AG04450 (cell line): ENCODE measurements at regions of chr1 and their contacts with region 1.

Region 1: DNA sequence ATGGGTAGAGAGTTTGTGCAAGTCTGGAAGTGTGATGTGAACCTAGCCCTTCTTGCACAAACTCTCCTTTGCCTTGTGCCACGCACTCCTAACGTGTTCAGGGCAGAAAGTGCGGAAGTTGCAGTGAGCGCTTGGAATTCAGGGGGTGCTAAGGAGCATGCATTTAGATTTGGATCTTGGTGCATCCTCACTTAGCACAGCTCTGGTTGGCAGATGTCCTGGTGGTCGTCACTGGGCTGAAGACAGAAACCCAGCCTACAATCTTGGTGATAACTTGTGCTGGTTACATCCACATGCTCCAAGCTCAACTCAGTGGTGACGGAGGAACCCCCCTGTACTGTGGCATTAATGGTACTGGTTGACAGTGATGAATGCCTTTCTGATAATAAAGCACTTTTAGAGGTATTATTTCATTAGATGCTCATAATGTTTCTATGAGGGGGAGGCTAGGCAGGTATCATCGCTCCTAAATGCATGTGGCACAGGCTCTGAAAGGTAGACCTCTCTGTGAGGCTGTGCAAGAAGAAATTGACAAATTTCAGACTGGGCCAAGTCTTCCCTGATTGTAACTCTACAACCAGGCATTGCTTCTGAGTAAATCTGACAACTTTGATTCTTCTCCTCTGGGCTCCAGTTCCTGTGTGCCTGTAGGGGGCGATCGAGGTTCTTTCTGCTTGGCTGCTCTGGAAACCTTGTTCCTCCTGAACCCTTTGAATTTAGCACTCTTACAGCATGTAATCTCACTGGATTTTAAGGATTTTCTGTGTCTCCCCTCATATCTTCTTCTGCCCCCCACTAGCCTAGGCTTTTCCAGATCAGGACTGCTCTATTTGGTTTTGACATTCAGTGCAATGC is 40.6 kb downstream of the MAPKAPK2 start:
- DNase-seq: no peak
- H3K4me3 ChIP-seq: no peak overlapping the region
- H3K27ac ChIP-seq: no peak overlapping the region
- H3K27me3 ChIP-seq: no peaks in the 10 kb centered on the region
- CTCF ChIP-seq: peak; percentile 75

Region 2: GRCh38 chr1:206540044-206540780 is 185.1 kb before region 1 on chr1:
- CTCF ChIA-PET with region 1: no interaction called
- POLR2A ChIA-PET with region 1: no interaction called
- DNase-seq: no peak
- H3K4me3 ChIP-seq: no peak overlapping the region
- H3K27ac ChIP-seq: no peak overlapping the region
- H3K27me3 ChIP-seq: no peaks in the 10 kb centered on the region
- CTCF ChIP-seq: no peak

Region 3: DNA sequence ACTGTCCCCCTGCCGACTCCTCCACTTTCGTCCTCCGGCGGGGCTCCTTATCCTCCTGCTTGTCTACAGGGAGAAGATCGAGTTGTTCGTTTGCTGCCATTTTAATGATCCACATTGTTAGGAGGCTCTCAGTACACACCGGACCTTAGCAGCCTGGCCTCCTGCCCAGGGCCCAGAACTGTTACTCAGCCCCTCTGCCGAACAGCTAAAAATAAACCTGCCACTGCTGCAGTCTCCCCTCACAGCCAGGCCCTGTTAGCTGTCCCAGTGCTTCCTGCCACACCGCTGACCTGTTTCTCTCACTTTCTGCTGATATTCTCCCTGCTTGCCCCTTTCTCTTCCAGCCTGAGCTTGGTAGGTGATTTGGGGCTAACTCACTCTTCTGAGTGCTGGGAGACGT is 32.3 kb before region 1 on chr1:
- CTCF ChIA-PET with region 1: interaction called, 26 read pairs
- POLR2A ChIA-PET with region 1: no interaction called
- DNase-seq: no peak
- H3K4me3 ChIP-seq: peak overlapping the region; percentile 31
- H3K27ac ChIP-seq: peak overlapping the region; percentile 82
- H3K27me3 ChIP-seq: no peaks in the 10 kb centered on the region
- CTCF ChIP-seq: no peak

Region 4: GRCh38 chr1:206748348-206749030 is 23.2 kb after region 1 on chr1:
- CTCF ChIA-PET with region 1: interaction called, 13 read pairs
- POLR2A ChIA-PET with region 1: no interaction called
- DNase-seq: no peak
- H3K4me3 ChIP-seq: no peak overlapping the region
- H3K27ac ChIP-seq: no peak overlapping the region
- H3K27me3 ChIP-seq: no peaks in the 10 kb centered on the region
- CTCF ChIP-seq: no peak

Region 5: GRCh38 chr1:206808615-206809014 is 83.3 kb after region 1 on chr1:
- CTCF ChIA-PET with region 1: interaction called, 37 read pairs
- POLR2A ChIA-PET with region 1: no interaction called
- DNase-seq: no peak
- H3K4me3 ChIP-seq: no peak overlapping the region
- H3K27ac ChIP-seq: no peak overlapping the region
- H3K27me3 ChIP-seq: no peaks in the 10 kb centered on the region
- CTCF ChIP-seq: peak; percentile 66

Region 6: GRCh38 chr1:206982216-206982615 is 256.9 kb after region 1 on chr1:
- CTCF ChIA-PET with region 1: interaction called, 13 read pairs
- POLR2A ChIA-PET with region 1: no interaction called
- DNase-seq: no peak
- H3K4me3 ChIP-seq: no peak overlapping the region
- H3K27ac ChIP-seq: no peak overlapping the region
- H3K27me3 ChIP-seq: peaks cover 42% of the 10 kb centered on the region
- CTCF ChIP-seq: peak; percentile 67

Region 7: DNA sequence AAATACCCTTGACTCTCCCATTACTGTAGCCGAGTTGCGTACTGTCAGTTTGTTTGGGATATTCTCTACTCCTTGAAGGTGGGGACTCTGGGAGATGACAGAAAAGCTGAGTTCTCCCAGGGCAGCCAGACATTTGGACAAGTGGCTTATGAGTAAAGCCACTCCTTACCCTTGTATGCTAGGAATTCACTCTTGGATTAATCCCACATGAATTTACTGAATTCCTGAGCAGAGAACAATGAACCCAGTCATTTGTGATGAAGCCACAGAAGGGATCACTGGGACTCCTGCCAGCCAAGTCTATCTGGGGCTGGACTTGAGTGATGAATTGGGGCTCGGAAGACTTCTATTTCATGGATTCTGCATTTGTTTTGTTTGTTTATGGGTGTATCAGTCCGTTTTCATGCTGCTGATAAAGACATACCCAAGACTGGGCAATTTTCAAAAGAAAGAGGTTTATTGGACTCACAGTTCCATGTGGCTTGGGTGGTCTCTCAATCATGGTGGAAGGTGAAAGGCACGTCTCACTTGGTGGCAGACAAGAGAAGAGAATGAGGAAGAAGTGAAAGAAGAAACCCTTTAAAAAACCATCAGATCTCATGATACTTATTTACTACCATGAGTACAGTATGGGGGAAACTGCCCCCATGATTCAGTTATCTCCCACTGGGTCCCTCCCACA is 282.2 kb after region 1 on chr1:
- CTCF ChIA-PET with region 1: no interaction called
- POLR2A ChIA-PET with region 1: no interaction called
- DNase-seq: peak; percentile 70
- H3K4me3 ChIP-seq: no peak overlapping the region
- H3K27ac ChIP-seq: peak overlapping the region; percentile 83
- H3K27me3 ChIP-seq: no peaks in the 10 kb centered on the region
- CTCF ChIP-seq: no peak